MCF 10A (cell line): ENCODE measurements at regions of chr3 and their contacts with region 1.

Region 1: GRCh38 chr3:48268381-48269183 is 27.7 kb downstream of the ZNF589 start:
- DNase-seq: peak; percentile 86
- H3K4me3 Mint-ChIP-seq: peak overlapping the region; percentile 69
- H3K27ac Mint-ChIP-seq: peak overlapping the region; percentile 83
- H3K4me1 Mint-ChIP-seq: peaks cover 29% of the 10 kb centered on the region
- H3K27me3 Mint-ChIP-seq: no peaks in the 10 kb centered on the region
- CTCF ChIP-seq: no peak

Region 2: DNA sequence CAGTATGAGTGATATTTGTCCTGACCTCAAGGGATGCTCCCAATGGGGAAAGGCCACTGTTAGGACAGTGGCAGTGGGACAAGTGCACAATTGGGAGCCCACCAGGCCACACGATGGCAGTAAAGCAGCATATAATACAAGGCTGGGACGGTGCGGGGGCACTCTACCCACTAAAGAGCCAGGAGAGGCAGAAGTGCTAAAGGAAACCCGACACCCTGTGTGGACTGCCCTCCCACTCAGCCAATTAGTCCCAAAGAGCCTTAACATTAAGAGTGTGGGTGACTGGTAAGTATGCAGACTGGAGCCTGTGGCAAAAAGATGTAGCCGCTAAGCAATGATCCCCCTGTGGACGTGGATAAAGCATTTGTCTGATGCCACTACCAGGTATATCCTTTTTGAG is 35.8 kb before region 1 on chr3:
- CTCF ChIA-PET with region 1: interaction called, 3 read pairs
- POLR2A ChIA-PET with region 1: interaction called, 3 read pairs
- intact Hi-C with region 1: loop called (anchors 2 kb)
- DNase-seq: peak; percentile 87
- H3K4me3 Mint-ChIP-seq: peak overlapping the region; percentile 29
- H3K27ac Mint-ChIP-seq: no peak overlapping the region
- H3K4me1 Mint-ChIP-seq: peaks cover 11% of the 10 kb centered on the region
- H3K27me3 Mint-ChIP-seq: no peaks in the 10 kb centered on the region
- CTCF ChIP-seq: peak; percentile 65

Region 3: GRCh38 chr3:48240711-48241491 is 27.7 kb before region 1 on chr3 and contains the start of gene ZNF589:
- CTCF ChIA-PET with region 1: interaction called, 4 read pairs
- POLR2A ChIA-PET with region 1: interaction called, 41 read pairs
- intact Hi-C with region 1: no loop called
- DNase-seq: peak; percentile 97
- H3K4me3 Mint-ChIP-seq: peak within 1 kb of the TSS; percentile 83
- H3K27ac Mint-ChIP-seq: peak within 1 kb of the TSS; percentile 81
- H3K4me1 Mint-ChIP-seq: no peaks in the 10 kb centered on the region
- H3K27me3 Mint-ChIP-seq: no peaks in the 10 kb centered on the region
- CTCF ChIP-seq: no peak
- total RNA-seq, gene ZNF589: 5.6 and 5.7 TPM in 2 replicates

Region 4: GRCh38 chr3:48285132-48285531 is 16.6 kb after region 1 on chr3:
- CTCF ChIA-PET with region 1: no interaction called
- POLR2A ChIA-PET with region 1: interaction called, 17 read pairs
- intact Hi-C with region 1: no loop called
- DNase-seq: no peak
- H3K4me3 Mint-ChIP-seq: no peak overlapping the region
- H3K27ac Mint-ChIP-seq: no peak overlapping the region
- H3K4me1 Mint-ChIP-seq: no peaks in the 10 kb centered on the region
- H3K27me3 Mint-ChIP-seq: no peaks in the 10 kb centered on the region
- CTCF ChIP-seq: no peak